ENCODE measurements at regions of chr3 and their contacts with region 1.

Region 1: DNA sequence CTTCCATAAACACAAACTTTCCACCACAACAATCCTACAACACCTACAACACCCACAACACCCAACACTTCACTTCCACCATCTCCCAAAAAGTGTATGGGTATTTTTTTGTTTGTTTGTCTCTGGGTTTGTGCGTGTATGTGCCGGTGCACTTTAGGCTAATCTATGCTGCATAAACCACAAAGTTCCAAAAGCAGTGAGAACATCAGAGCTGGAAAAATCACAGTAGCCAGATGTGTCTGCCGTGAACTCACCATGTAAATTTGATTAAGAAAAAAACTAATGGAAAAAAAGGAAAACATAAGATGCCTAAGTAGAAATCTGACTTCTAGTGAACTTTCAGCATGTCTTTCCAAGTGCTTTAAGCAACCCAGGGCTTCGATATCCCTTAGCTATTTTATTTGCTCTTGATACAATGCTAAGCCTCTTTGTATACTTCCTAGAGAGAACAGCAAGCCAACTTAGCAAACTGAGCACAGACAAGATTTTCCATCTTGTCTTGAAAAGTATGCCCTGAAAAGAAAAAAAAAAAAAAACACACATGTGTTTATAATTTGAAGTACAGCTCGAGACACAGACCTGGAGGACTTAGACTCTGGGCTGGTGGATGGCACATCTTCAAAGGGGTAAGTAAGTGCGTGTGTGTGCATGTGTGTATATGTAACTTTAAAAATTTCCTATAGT is 91.4 kb downstream of the WWTR1 start:
- DNase-seq: no peak
- ATAC-seq: no peak
- H3K4me3 ChIP-seq: no peak overlapping the region
- H3K27ac ChIP-seq: no peak overlapping the region
- H3K4me1 ChIP-seq: no peaks in the 10 kb centered on the region
- H3K27me3 ChIP-seq: no peaks in the 10 kb centered on the region
- CTCF ChIP-seq: no peak
- EP300 ChIP-seq: no peak
- POLR2A ChIP-seq: no peak
- RAD21 ChIP-seq: no peak

Region 2: DNA sequence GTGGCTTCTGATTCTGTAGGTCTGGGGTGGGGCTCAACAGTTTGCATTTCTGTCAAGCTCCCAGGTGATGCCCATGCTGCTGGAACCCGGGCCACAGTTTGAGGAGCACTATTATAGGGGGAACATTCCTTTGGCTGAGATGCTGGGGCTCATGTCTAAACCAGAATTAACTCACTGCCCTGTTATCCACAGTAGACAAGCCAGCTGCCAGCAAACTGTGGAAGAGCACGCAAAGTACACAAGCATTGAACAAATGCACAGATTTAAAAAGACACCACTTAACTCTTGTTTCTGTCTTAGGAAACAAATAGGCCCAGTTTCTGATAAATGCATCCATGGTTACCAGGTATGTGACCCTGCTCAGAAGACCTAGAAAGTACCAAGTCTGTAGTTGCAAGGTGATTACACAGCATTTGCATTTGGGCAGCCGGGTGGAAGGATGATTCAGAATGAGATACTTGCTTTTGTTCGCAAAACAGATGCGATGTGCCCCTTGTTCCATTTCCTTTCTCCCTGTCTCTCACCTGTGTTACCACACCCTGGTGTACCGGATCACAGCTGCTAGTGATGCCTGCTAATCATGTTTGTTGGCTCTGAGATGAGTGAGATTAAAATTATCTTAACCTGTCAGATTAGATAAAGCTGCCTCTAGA is 562.7 kb before region 1 on chr3:
- CTCF ChIA-PET with region 1: no interaction called
- POLR2A ChIA-PET with region 1: no interaction called
- RAD21 ChIA-PET with region 1: no interaction called
- SMC1A ChIA-PET with region 1: no interaction called
- in situ Hi-C with region 1: no loop called
- intact Hi-C with region 1: no loop called
- DNase-seq: no peak
- ATAC-seq: peak; percentile 85
- H3K4me3 ChIP-seq: no peak overlapping the region
- H3K27ac ChIP-seq: no peak overlapping the region
- H3K4me1 ChIP-seq: peaks cover 19% of the 10 kb centered on the region
- H3K27me3 ChIP-seq: no peaks in the 10 kb centered on the region
- CTCF ChIP-seq: no peak
- EP300 ChIP-seq: no peak
- POLR2A ChIP-seq: no peak
- RAD21 ChIP-seq: no peak

Region 3: DNA sequence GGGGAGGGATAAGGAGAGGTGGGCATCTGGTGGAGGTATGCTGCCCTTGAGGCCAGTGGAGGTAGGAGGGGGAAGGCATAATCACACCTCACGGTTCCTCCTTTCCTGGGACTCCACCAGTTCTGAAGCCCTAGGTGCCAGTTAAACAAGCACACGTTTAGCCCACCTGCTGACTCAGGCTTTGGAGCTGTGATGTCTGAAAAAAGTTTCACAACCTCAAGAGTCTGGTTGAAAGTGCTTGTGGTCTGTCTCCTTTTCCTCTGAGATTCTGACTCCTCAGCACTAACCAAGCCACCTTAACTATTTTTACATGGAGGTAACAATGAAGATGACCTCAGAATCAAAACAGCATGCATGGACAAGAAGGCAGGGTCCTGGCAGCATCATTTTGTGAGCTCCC is 414.0 kb before region 1 on chr3:
- CTCF ChIA-PET with region 1: no interaction called
- POLR2A ChIA-PET with region 1: no interaction called
- RAD21 ChIA-PET with region 1: no interaction called
- SMC1A ChIA-PET with region 1: no interaction called
- in situ Hi-C with region 1: no loop called
- intact Hi-C with region 1: no loop called
- DNase-seq: peak; percentile 51
- ATAC-seq: peak; percentile 94
- H3K4me3 ChIP-seq: no peak overlapping the region
- H3K27ac ChIP-seq: peak overlapping the region; percentile 27; the same call in 1 of the 2 replicates
- H3K4me1 ChIP-seq: peaks cover 15% of the 10 kb centered on the region
- H3K27me3 ChIP-seq: no peaks in the 10 kb centered on the region
- CTCF ChIP-seq: no peak
- EP300 ChIP-seq: 0 out of 4 replicates have a peak, but pooled peaks of 1 of the 2 experiments have one; percentile 14
- POLR2A ChIP-seq: no peak
- RAD21 ChIP-seq: no peak

Region 4: GRCh38 chr3:149314807-149315578 is 251.4 kb before region 1 on chr3:
- CTCF ChIA-PET with region 1: no interaction called
- POLR2A ChIA-PET with region 1: no interaction called
- RAD21 ChIA-PET with region 1: no interaction called
- SMC1A ChIA-PET with region 1: no interaction called
- in situ Hi-C with region 1: no loop called
- intact Hi-C with region 1: no loop called
- DNase-seq: no peak
- ATAC-seq: no peak
- H3K4me3 ChIP-seq: no peak overlapping the region
- H3K27ac ChIP-seq: no peak overlapping the region
- H3K4me1 ChIP-seq: no peaks in the 10 kb centered on the region
- H3K27me3 ChIP-seq: no peaks in the 10 kb centered on the region
- CTCF ChIP-seq: no peak
- EP300 ChIP-seq: no peak
- POLR2A ChIP-seq: no peak
- RAD21 ChIP-seq: no peak

Region 5: GRCh38 chr3:149512209-149512782 is 54.1 kb before region 1 on chr3:
- CTCF ChIA-PET with region 1: interaction called, 13 read pairs
- POLR2A ChIA-PET with region 1: no interaction called
- RAD21 ChIA-PET with region 1: interaction called, 10 read pairs
- SMC1A ChIA-PET with region 1: interaction called, 35 read pairs
- in situ Hi-C with region 1: no loop called
- intact Hi-C with region 1: no loop called
- DNase-seq: no peak
- ATAC-seq: peak; percentile 92
- H3K4me3 ChIP-seq: no peak overlapping the region
- H3K27ac ChIP-seq: no peak overlapping the region
- H3K4me1 ChIP-seq: no peaks in the 10 kb centered on the region; the same call in 1 of the 2 replicates
- H3K27me3 ChIP-seq: no peaks in the 10 kb centered on the region
- CTCF ChIP-seq: peak; percentile 81 to 85 (median 84); a peak in 5 of 6 replicates
- EP300 ChIP-seq: no peak
- POLR2A ChIP-seq: no peak
- RAD21 ChIP-seq: peak; percentile 93

Region 6: DNA sequence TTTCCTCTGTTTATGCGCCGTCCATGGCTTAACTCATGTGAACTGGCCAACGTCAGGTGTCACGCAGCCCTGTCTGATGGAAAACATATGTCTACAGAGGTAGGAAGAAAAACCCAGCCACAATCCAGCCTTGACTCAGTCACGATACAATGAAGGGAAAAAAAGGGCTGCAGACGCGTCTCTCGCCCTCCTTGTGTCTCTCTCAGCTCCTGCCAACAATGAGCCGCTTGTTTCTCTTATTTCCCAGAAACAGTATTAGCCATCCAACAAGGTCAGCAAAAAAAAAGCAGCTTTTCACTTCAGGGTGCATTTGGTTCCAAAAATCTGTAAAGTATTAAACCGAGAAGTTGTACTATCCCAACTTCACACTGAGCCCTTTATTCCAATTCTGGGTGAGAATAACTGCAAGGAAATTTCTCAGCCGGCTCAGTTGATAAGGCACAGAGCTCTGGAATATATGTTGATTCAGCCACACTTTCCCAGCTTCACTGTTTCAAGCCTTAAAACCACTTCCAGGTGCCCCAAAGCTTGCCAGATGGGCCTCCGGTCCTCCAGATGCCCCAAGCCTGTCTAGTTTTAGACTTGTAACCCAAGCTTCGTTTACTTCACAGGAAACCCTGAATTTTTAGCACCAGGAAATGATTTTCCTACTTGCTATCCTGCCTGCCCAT is 12.5 kb before region 1 on chr3:
- CTCF ChIA-PET with region 1: interaction called, 20 read pairs
- POLR2A ChIA-PET with region 1: interaction called, 7 read pairs
- RAD21 ChIA-PET with region 1: interaction called, 12 read pairs
- SMC1A ChIA-PET with region 1: interaction called, 14 read pairs
- in situ Hi-C with region 1: no loop called
- intact Hi-C with region 1: no loop called
- DNase-seq: no peak
- ATAC-seq: no peak
- H3K4me3 ChIP-seq: no peak overlapping the region
- H3K27ac ChIP-seq: no peak overlapping the region
- H3K4me1 ChIP-seq: peaks cover 9% of the 10 kb centered on the region
- H3K27me3 ChIP-seq: no peaks in the 10 kb centered on the region
- CTCF ChIP-seq: no peak
- EP300 ChIP-seq: no peak
- POLR2A ChIP-seq: no peak
- RAD21 ChIP-seq: no peak

Region 7: GRCh38 chr3:149603126-149604074 is 37.0 kb after region 1 on chr3:
- CTCF ChIA-PET with region 1: interaction called, 80 read pairs
- POLR2A ChIA-PET with region 1: interaction called, 5 read pairs
- RAD21 ChIA-PET with region 1: interaction called, 181 read pairs
- SMC1A ChIA-PET with region 1: interaction called, 505 read pairs
- in situ Hi-C with region 1: no loop called
- intact Hi-C with region 1: loop called (anchors 5 kb)
- DNase-seq: no peak
- ATAC-seq: no peak
- H3K4me3 ChIP-seq: no peak overlapping the region
- H3K27ac ChIP-seq: peak overlapping the region; percentile 12; the same call in 1 of the 2 replicates
- H3K4me1 ChIP-seq: peaks cover 28% of the 10 kb centered on the region
- H3K27me3 ChIP-seq: no peaks in the 10 kb centered on the region
- CTCF ChIP-seq: no peak
- EP300 ChIP-seq: peak; percentile 35 to 58; a peak in 1 of 4 replicates
- POLR2A ChIP-seq: no peak
- RAD21 ChIP-seq: no peak

Region 8: GRCh38 chr3:149646181-149646766 is 79.8 kb after region 1 on chr3:
- CTCF ChIA-PET with region 1: interaction called, 7 read pairs
- POLR2A ChIA-PET with region 1: no interaction called
- RAD21 ChIA-PET with region 1: interaction called, 6 read pairs
- SMC1A ChIA-PET with region 1: interaction called, 23 read pairs
- in situ Hi-C with region 1: no loop called
- intact Hi-C with region 1: no loop called
- DNase-seq: no peak
- ATAC-seq: peak; percentile 51
- H3K4me3 ChIP-seq: no peak overlapping the region
- H3K27ac ChIP-seq: no peak overlapping the region
- H3K4me1 ChIP-seq: peaks cover 14% of the 10 kb centered on the region
- H3K27me3 ChIP-seq: no peaks in the 10 kb centered on the region
- CTCF ChIP-seq: no peak
- EP300 ChIP-seq: no peak
- POLR2A ChIP-seq: no peak
- RAD21 ChIP-seq: no peak

Region 9: DNA sequence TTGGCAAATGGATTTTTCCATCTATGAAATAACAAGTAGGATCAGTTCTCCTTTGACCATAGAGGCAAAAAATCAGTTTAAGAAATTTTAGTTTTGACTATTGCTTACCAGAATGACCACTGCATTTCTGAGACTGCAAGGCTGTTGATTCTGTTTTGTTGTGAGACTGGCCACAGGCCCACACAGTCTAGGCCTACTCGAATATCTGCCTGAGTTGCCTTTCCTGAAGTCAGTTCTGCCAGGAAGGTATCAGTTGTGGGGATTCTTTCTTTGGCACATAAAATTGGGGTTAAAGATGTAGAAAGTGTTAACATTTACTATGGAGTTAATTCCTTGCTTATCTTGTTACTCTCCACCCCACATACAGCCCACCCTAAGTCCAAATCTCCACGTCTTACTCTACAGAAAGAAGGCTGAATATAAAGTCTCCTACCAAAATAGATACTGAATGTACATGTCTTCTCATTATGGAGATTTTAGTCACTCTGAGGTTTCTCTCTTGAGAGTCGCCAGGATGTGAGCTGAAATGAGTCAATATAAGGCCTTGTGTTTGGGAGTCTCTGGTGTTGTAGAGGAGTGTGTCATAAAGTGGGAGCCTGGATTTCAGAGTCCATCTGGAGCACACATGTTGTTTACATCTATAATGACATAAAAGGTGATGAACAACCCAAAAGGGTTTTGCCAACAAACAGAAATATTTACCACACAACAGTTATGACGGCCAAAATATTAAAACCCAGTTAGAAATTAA is 136.4 kb after region 1 on chr3:
- CTCF ChIA-PET with region 1: interaction called, 17 read pairs
- POLR2A ChIA-PET with region 1: interaction called, 3 read pairs
- RAD21 ChIA-PET with region 1: interaction called, 15 read pairs
- SMC1A ChIA-PET with region 1: interaction called, 34 read pairs
- in situ Hi-C with region 1: no loop called
- intact Hi-C with region 1: no loop called
- DNase-seq: no peak
- ATAC-seq: peak; percentile 64
- H3K4me3 ChIP-seq: no peak overlapping the region
- H3K27ac ChIP-seq: no peak overlapping the region
- H3K4me1 ChIP-seq: no peaks in the 10 kb centered on the region
- H3K27me3 ChIP-seq: no peaks in the 10 kb centered on the region
- CTCF ChIP-seq: no peak
- EP300 ChIP-seq: no peak
- POLR2A ChIP-seq: no peak
- RAD21 ChIP-seq: no peak

Region 10: DNA sequence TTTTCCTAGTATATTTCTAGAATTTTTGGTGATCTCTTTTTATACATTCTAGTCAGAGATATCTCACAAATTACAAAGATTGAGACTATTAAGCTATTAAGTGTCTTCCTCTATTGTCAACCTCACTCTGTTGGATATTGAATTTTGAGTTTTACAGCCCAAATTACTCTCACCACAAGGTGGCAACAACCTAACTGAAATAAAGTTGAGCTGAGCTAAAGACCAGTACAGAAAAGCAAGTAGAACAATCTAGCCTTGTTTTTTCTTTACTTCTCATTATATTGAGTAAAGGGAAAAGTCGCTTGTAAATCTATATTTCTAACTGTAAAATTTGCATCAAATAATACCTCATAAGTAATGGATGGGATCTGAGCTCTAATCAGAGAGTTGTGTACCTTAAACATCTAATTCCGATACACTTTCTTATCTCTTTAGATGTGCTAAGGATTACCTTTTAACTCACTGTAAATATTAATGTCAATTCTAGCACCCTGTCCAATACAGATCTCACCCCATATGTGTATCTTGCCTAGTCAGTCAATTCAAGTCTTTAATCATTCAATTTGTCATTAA is 199.4 kb after region 1 on chr3:
- CTCF ChIA-PET with region 1: interaction called, 45 read pairs
- POLR2A ChIA-PET with region 1: no interaction called
- RAD21 ChIA-PET with region 1: interaction called, 27 read pairs
- SMC1A ChIA-PET with region 1: interaction called, 11 read pairs
- in situ Hi-C with region 1: no loop called
- intact Hi-C with region 1: no loop called
- DNase-seq: no peak
- ATAC-seq: peak; percentile 50; the same call in 2 of the 3 replicates
- H3K4me3 ChIP-seq: no peak overlapping the region
- H3K27ac ChIP-seq: no peak overlapping the region
- H3K4me1 ChIP-seq: no peaks in the 10 kb centered on the region
- H3K27me3 ChIP-seq: peaks cover 0 to 7% of the 10 kb centered on the region in 2 experiments; a peak in 1 of 4 replicates
- CTCF ChIP-seq: peak; percentile 39 to 52 (median 47); a peak in 5 of 6 replicates
- EP300 ChIP-seq: no peak
- POLR2A ChIP-seq: no peak
- RAD21 ChIP-seq: peak; percentile 40; the same call in 1 of the 2 replicates

Measured in GM12878 (cell line).